ENCODE measurements at regions of chr1 and their contacts with region 1.

Region 1: DNA sequence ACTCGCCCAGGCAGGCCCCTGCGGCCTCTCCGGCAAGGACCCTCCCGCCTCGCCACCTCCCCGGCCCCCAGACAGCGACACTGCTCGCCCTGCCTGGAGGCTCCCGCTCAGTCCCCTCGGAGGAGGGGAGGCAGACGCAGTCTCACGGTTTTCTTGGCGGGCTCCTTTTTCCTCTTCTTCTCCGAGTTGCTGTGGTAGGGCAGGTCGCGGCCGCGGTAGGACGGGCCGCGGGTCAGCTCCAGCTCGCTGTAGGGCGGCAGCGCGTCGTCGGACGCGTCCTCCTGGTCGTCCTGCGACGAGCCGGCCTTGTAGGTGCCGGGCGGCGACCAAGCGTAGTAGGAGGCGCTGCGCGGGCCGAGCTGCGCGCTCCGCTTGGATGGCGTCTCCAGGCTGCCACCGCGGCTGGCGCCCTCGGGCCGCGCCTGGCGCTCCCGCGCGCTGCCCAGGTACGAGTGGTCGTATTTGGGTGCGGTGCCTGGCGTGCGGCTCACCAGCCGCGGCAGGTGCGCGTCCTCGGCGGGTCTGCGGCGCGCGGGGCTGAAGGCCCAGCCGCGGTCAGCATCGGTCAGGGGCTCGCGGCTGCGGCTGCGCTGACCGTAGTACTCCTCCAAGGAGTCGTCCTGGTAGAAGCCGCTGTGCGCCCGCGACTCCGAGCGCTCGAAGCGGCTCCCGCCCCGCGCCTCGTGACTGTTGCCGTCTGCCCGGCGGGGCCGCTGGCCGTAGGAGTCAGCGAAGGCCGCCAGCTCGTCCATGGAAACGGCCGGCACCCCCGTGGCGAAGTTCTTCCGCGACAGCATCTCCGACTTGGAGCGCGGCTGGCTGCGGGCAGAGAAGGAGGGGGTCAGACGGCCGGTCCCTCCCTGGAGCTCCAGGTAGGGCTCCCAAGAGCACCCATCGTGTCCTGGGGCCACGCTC is 44.8 kb upstream of the TADA1 start:
- DNase-seq: no peak

Region 2: DNA sequence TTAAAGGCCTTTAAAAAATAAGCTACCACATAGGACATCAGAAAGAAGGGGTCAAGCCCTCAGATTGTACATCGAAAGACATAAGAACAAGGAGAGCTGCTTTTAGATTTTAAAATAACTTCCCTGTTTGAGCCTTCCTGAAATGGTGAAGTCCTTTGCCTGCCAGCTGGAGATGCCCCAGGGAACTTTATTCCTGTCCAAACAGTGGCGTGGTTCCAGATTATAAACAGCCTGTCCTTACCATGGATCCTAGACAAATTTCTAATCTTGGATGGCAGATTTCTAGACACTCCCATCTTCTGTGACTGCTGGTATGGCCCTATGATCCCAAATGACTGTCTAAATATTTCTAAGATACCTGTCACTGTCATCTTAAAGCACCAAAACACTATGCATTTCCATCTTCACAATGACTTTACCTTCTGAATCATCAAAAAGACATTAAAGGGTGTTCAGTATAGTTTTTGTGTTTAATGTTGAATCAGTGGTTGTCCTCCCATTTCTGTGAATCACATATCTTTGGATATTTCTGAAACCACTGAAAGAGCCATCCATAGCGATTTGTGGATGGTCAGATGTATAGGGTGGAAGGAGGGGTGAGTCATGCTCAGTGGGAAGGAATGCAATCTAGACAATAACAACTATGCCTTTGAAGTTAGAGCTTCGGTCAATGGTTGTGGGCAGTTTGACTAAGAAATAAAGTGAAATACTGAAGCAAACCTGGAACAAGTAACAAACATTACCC is 31.4 kb after region 1 on chr1:
- intact Hi-C with region 1: loop called (anchors 1 kb)
- DNase-seq: no peak

Region 3: GRCh38 chr1:166964479-166964878 is 43.7 kb after region 1 on chr1:
- intact Hi-C with region 1: no loop called
- DNase-seq: no peak

Region 4: GRCh38 chr1:166975361-166976129 is 54.7 kb after region 1 on chr1 and contains the start of gene ILDR2:
- intact Hi-C with region 1: loop called (anchors 5 kb)
- DNase-seq: no peak
- total RNA-seq, gene ILDR2: 23.1 TPM